CD4-positive, alpha-beta memory T cell (primary cell): ENCODE measurements at regions of chr9 and their contacts with region 1.

Region 1: GRCh38 chr9:7976167-7976755 is 176.7 kb upstream of the DMAC1 start:
- DNase-seq: peak; percentile 84 to 90 (median 89)
- H3K4me3 ChIP-seq: no peak overlapping the region
- H3K4me3 Mint-ChIP-seq: peak overlapping the region; percentile 44 to 81 (median 71)
- H3K27ac ChIP-seq: peak overlapping the region; percentile 51
- H3K27ac Mint-ChIP-seq: peak overlapping the region; percentile 83 to 97 (median 94)
- H3K4me1 ChIP-seq: peaks cover 64% of the 10 kb centered on the region
- H3K4me1 Mint-ChIP-seq: peaks cover 42 to 65% (median 53%) of the 10 kb centered on the region in 4 donors
- H3K27me3 ChIP-seq: no peaks in the 10 kb centered on the region
- H3K27me3 Mint-ChIP-seq: no peaks in the 10 kb centered on the region

Region 2: DNA sequence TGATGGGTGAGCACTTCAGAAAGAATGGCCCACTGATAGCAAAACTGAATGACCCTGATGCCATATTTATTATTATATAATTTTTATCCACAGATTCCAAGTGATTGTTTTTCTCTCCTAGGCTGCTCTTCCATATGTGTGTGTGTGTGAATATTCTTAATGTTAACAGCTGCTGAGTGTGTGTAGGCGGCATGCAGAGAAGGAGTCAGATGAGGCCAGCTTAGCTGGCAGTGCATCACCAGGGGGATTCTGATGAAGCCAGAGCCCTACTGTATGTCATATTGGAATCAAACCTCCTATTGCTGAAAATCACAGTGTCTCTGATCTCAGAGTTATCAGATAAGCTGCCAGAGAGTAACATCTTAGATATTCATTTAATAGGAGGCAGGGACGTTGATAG is 353.8 kb before region 1 on chr9:
- CTCF ChIA-PET with region 1: no interaction called
- POLR2A ChIA-PET with region 1: no interaction called
- intact Hi-C with region 1: loop called (anchors 5 kb)
- DNase-seq: no peak
- H3K4me3 ChIP-seq: no peak overlapping the region
- H3K4me3 Mint-ChIP-seq: no peak overlapping the region
- H3K27ac ChIP-seq: no peak overlapping the region
- H3K27ac Mint-ChIP-seq: no peak overlapping the region
- H3K4me1 ChIP-seq: peaks cover 14% of the 10 kb centered on the region
- H3K4me1 Mint-ChIP-seq: peaks cover 14 to 23% (median 18%) of the 10 kb centered on the region in 4 donors
- H3K27me3 ChIP-seq: no peaks in the 10 kb centered on the region
- H3K27me3 Mint-ChIP-seq: no peaks in the 10 kb centered on the region

Region 3: DNA sequence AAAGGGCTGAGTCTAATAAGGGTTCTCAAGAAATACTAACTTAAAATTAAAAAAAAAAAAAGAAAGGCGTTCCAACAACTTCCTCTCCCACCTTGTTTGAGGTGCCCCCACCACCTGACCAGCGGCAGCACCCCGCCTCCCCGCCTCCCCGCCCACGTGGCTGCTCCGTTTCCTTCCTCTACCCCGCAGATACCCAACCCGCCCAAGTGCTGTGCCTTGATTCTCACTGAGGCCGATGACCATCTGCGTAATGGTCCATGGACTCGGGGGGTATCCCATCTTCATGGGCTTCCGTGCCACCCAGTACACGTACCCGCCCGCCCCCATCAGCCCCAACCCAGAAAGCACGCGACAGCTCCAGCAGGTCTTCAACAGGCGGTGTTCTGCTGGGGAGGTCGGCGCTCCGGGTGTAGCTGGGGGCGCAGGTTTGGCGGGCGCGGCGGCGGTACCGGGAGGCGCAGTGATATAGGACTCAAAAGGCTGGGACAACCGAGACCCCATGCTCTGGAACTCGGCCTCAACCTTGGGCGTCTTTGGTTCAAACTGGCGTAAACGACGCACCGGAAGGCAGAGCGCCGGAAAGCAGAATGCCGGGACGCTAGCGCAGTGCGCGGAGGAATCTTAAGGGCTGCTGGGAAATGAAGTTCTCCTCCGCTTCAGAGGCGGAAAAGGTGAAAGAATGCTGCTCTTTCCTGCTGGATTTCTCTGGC is 176.9 kb before region 1 on chr9 and contains the start of gene DMAC1:
- CTCF ChIA-PET with region 1: no interaction called
- POLR2A ChIA-PET with region 1: interaction called, 3 read pairs
- intact Hi-C with region 1: loop called (anchors 1 kb)
- DNase-seq: peak; percentile 72 to 81 (median 77)
- H3K4me3 ChIP-seq: peak within 1 kb of the TSS; percentile 27 to 92
- H3K4me3 Mint-ChIP-seq: peak within 1 kb of the TSS; percentile 92 to 99 (median 95)
- H3K27ac ChIP-seq: peak within 1 kb of the TSS; percentile 88
- H3K27ac Mint-ChIP-seq: peak within 1 kb of the TSS; percentile 94 to 96 (median 96)
- H3K4me1 ChIP-seq: peaks cover 25% of the 10 kb centered on the region
- H3K4me1 Mint-ChIP-seq: peaks cover 17 to 55% (median 25%) of the 10 kb centered on the region in 4 donors
- H3K27me3 ChIP-seq: no peaks in the 10 kb centered on the region
- H3K27me3 Mint-ChIP-seq: no peaks in the 10 kb centered on the region
- total RNA-seq, gene DMAC1: 30.8 to 38.0 TPM

Region 4: GRCh38 chr9:7844242-7844641 is 132.0 kb before region 1 on chr9:
- CTCF ChIA-PET with region 1: interaction called, 3 read pairs
- POLR2A ChIA-PET with region 1: interaction called, 3 read pairs
- intact Hi-C with region 1: loop called (anchors 10 kb)
- DNase-seq: peak in 4 of 5 donors; percentile 24 to 35 (median 28)
- H3K4me3 ChIP-seq: no peak overlapping the region
- H3K4me3 Mint-ChIP-seq: no peak overlapping the region
- H3K27ac ChIP-seq: no peak overlapping the region
- H3K27ac Mint-ChIP-seq: no peak overlapping the region
- H3K4me1 ChIP-seq: no peaks in the 10 kb centered on the region
- H3K4me1 Mint-ChIP-seq: peaks cover 0 to 5% (median 2%) of the 10 kb centered on the region in 4 donors
- H3K27me3 ChIP-seq: no peaks in the 10 kb centered on the region
- H3K27me3 Mint-ChIP-seq: no peaks in the 10 kb centered on the region

Region 5: DNA sequence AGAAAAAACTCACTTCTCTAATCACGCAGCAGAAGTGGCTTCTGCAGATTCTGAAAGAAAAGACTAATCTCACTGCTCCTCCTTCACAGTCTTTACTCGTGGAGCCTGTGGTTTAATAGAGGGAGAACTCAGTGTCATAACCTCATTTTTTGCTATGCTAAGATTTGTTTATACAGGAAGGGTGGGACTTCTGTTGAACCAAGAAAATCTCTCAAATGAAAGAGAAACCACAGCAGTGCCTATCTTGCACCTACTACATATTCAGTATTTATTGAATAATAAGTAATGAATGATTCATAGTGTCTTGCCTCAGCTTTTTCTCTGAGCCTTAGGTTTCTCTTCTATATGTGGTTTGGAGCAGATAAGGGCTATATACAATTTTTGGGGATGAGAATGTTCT is 40.6 kb before region 1 on chr9:
- CTCF ChIA-PET with region 1: no interaction called
- POLR2A ChIA-PET with region 1: interaction called, 16 read pairs
- intact Hi-C with region 1: loop called (anchors 1 kb)
- DNase-seq: peak; percentile 41 to 81 (median 73)
- H3K4me3 ChIP-seq: peak overlapping the region in 1 of 2 donors; percentile 44
- H3K4me3 Mint-ChIP-seq: peak overlapping the region; percentile 55 to 91 (median 76)
- H3K27ac ChIP-seq: peak overlapping the region; percentile 65
- H3K27ac Mint-ChIP-seq: peak overlapping the region; percentile 87 to 98 (median 96)
- H3K4me1 ChIP-seq: peaks cover 28% of the 10 kb centered on the region
- H3K4me1 Mint-ChIP-seq: peaks cover 22 to 32% (median 28%) of the 10 kb centered on the region in 4 donors
- H3K27me3 ChIP-seq: no peaks in the 10 kb centered on the region
- H3K27me3 Mint-ChIP-seq: no peaks in the 10 kb centered on the region

Region 6: GRCh38 chr9:8011974-8012373 is 35.7 kb after region 1 on chr9:
- CTCF ChIA-PET with region 1: no interaction called
- POLR2A ChIA-PET with region 1: no interaction called
- intact Hi-C with region 1: loop called (anchors 5 kb)
- DNase-seq: no peak
- H3K4me3 ChIP-seq: no peak overlapping the region
- H3K4me3 Mint-ChIP-seq: no peak overlapping the region
- H3K27ac ChIP-seq: no peak overlapping the region
- H3K27ac Mint-ChIP-seq: no peak overlapping the region
- H3K4me1 ChIP-seq: no peaks in the 10 kb centered on the region
- H3K4me1 Mint-ChIP-seq: no peaks in the 10 kb centered on the region
- H3K27me3 ChIP-seq: no peaks in the 10 kb centered on the region
- H3K27me3 Mint-ChIP-seq: peaks cover under 1 to 1% of the 10 kb centered on the region in 2 donors